Gastrocnemius medialis (tissue), 4 donors: ENCODE measurements at regions of chr12 and their contacts with region 1.

Region 1: DNA sequence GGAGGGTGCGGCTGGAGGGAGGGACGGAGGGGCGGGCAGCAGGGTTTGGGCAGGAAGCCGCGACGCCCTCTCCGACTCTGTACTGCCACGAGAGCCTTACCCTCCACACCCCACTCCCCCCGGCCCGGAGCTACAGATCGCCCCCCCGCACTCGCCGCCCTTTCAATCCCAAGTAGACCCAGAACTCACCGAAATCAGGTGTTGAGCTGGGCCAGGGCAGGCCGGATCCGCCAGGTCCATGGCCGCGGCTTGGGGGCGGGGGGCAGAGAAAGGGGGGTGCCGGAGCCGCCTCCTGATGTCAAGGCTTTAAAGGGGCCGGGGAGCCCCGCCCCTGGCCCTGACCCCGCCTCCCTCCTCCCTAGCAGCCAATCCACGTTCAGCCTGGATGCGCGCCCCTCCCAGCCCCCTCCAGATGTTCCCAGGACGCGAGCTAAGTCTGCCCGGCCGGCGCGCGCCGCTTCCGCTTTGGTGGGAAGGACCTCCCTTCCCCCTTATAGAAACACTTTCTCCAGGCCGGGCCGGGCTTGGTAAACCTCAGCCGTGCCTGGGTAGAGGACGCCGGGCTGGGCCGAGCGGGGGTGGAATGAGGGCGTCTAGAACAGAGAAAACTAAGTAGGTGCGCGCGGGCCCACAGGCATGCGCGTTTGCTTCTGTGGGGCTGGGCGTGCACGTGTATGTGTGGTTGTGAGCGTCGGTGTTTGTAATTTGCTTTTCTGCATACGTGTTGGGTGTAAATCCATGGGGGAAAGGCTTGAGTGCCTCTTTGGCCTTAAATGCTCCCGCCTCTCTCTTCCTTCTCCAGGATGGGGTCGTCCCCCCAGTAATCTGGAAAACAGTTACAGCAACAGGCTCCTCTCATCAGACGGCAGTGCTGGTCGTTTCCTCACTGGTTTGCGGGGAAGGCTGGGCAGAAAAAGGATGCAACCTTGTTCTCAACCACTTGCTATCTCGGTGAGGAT is at the start of gene NCKAP5L:
- DNase-seq: peak; percentile 94
- ATAC-seq: peak; percentile 90 to 92
- H3K4me3 ChIP-seq: peak within 1 kb of the TSS; percentile 72 to 98 (median 88)
- H3K27ac ChIP-seq: peak within 1 kb of the TSS; percentile 90 to 96 (median 94)
- H3K4me1 ChIP-seq: peaks cover 41 to 50% of the 10 kb centered on the region in 2 donors
- H3K27me3 ChIP-seq: no peaks in the 10 kb centered on the region
- CTCF ChIP-seq: no peak
- POLR2A ChIP-seq: peak; percentile 62 to 79
- total RNA-seq, gene NCKAP5L: 8.4 to 15.5 (median 10.4) TPM

Region 2: DNA sequence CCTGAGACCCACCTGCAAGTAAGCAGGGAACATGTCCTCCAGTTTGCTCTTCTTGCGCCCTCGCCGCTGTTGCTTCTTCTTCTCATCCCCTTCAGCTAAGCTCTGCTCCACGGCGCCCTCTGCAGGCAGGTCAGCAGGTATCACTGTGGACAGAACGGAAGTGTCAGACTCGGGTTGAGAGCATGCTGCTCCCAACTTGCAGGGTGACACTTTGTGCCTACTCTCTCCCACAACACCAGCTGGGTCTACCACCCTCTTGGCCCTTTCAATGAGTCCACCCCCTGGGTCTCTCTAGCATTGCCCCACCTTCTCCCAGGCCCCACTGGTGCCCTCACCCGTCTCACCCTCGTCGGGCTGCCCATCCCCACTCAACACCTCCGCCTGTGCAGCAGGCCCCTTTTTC is 784.6 kb before region 1 on chr12:
- in situ Hi-C with region 1: no loop called
- intact Hi-C with region 1: no loop called
- DNase-seq: peak in 1 of 2 donors; percentile 61
- ATAC-seq: peak in 1 of 2 donors; percentile 80
- H3K4me3 ChIP-seq: no peak overlapping the region
- H3K27ac ChIP-seq: no peak overlapping the region
- H3K4me1 ChIP-seq: no peaks in the 10 kb centered on the region
- H3K27me3 ChIP-seq: no peaks in the 10 kb centered on the region
- CTCF ChIP-seq: peak; percentile 37 to 69 (median 52)
- POLR2A ChIP-seq: no peak

Region 3: GRCh38 chr12:49740930-49741881 is 87.2 kb before region 1 on chr12 and contains the start of gene TMBIM6:
- in situ Hi-C with region 1: no loop called
- intact Hi-C with region 1: loop called (anchors 5 kb)
- DNase-seq: peak; percentile 100
- ATAC-seq: peak; percentile 98 to 99
- H3K4me3 ChIP-seq: peak within 1 kb of the TSS; percentile 80 to 100 (median 88)
- H3K27ac ChIP-seq: peak within 1 kb of the TSS; percentile 97 to 100 (median 98)
- H3K4me1 ChIP-seq: peaks cover 31 to 38% of the 10 kb centered on the region in 2 donors
- H3K27me3 ChIP-seq: no peaks in the 10 kb centered on the region
- CTCF ChIP-seq: peak; percentile 91 to 98 (median 95)
- POLR2A ChIP-seq: peak; percentile 98 to 99
- total RNA-seq, gene TMBIM6: 181 to 310 (median 224) TPM

Region 4: DNA sequence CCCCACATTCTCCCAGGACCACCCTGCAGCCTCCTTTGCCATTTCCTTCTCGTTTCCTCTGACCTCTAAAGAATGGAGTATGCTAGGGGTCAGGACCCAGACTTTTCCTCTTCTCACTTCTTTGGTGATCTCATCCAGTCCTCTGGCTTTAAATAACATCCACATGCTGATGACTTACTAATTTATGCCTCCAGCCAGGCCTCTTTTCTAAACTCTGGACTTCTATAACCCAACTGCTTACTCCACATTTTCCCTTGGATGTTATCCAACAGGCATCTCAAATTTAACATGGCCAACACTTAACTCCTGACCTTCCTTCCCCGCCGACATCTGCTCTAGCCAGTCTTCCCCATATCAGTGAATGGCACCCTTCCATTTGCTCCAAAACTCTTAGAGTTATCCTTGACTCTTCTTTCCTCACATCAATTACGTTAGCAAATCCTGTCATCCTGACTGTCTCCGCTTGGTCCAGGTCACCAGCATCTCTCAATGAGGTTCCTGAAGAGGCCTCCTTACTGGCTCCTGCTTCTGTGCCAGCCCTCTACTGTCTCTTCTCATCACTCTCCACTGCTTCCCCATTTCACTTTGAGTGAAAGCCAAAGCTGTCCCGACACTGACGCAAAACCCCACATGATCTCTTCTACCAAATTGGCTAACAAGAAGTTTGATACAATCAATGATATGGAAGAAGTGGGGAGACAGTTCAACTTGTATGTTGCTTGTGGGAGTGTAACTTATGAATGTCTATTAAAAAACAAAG is 44.3 kb before region 1 on chr12:
- in situ Hi-C with region 1: loop called in 3 of 4 experiments (anchors 10 kb)
- intact Hi-C with region 1: loop called (anchors 5 kb)
- DNase-seq: no peak
- ATAC-seq: peak; percentile 77 to 86
- H3K4me3 ChIP-seq: no peak overlapping the region
- H3K27ac ChIP-seq: peak overlapping the region; percentile 56 to 74 (median 66)
- H3K4me1 ChIP-seq: peaks cover 20 to 22% of the 10 kb centered on the region in 2 donors
- H3K27me3 ChIP-seq: no peaks in the 10 kb centered on the region
- CTCF ChIP-seq: no peak
- POLR2A ChIP-seq: no peak

Region 5: DNA sequence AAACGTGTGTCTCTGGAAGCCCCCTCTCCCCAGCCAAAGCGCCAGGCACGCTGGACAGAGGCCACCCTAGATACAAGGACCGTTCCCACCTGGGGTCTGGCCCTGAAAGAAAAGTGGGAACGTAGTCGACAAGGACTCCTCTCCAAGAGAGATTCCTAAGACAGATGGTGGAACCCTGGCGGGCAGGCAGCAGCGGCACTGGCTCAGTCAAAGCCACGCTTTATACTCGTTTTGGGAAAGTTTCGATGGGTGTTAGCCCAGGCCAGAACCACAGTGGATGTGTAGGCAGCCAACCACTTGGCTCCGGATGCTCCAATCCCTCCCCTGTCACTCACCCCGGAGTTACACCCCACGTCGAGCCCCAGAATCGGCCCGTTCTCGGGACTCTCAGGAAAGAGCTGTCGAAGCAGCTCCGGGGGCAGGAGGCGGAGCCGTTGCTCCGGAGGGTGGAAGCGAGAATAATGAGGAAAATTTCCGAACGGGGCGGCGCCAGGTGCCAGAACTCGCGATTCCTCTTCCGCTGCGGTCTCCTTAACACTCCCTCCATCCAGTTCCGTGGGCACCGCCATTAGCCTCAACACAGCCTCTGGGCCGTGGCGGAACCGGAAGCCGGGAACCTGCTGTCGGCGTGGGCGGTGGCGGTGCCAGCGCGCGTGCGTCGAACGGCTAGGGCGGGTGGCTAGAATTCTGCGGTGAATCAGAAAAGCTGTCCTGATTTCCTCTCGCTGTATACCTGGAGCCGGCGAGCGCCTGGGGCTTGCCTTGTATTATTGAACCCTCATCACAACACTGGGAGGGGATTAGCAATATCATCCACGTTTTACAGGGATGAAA is 14.3 kb after region 1 on chr12 and contains the start of gene BCDIN3D:
- in situ Hi-C with region 1: no loop called
- intact Hi-C with region 1: loop called (anchors 1 kb)
- DNase-seq: peak; percentile 80 to 84
- ATAC-seq: peak; percentile 94 to 96
- H3K4me3 ChIP-seq: peak within 1 kb of the TSS; percentile 85 to 96 (median 92)
- H3K27ac ChIP-seq: peak within 1 kb of the TSS; percentile 85 to 94 (median 88)
- H3K4me1 ChIP-seq: peaks cover 11 to 17% of the 10 kb centered on the region in 2 donors
- H3K27me3 ChIP-seq: peaks cover 4 to 9% (median 8%) of the 10 kb centered on the region in 3 donors
- CTCF ChIP-seq: no peak
- POLR2A ChIP-seq: peak; percentile 58 to 75
- total RNA-seq, gene BCDIN3D: 1.2 to 2.7 (median 2.3) TPM

Region 6: GRCh38 chr12:50425589-50426258 is 597.3 kb after region 1 on chr12:
- in situ Hi-C with region 1: no loop called
- intact Hi-C with region 1: no loop called
- DNase-seq: no peak
- ATAC-seq: no peak
- H3K4me3 ChIP-seq: no peak overlapping the region
- H3K27ac ChIP-seq: peak overlapping the region in 2 of 4 donors; percentile 26 to 29
- H3K4me1 ChIP-seq: peaks cover 16 to 25% of the 10 kb centered on the region in 2 donors
- H3K27me3 ChIP-seq: no peaks in the 10 kb centered on the region
- CTCF ChIP-seq: no peak
- POLR2A ChIP-seq: no peak

Region 7: GRCh38 chr12:51160814-51161459 is 1332.5 kb after region 1 on chr12:
- in situ Hi-C with region 1: no loop called
- intact Hi-C with region 1: no loop called
- DNase-seq: no peak
- ATAC-seq: no peak
- H3K4me3 ChIP-seq: no peak overlapping the region
- H3K27ac ChIP-seq: no peak overlapping the region
- H3K4me1 ChIP-seq: no peaks in the 10 kb centered on the region
- H3K27me3 ChIP-seq: no peaks in the 10 kb centered on the region
- CTCF ChIP-seq: no peak
- POLR2A ChIP-seq: no peak